Aorta (tissue), 5 donors: ENCODE measurements at regions of chr13 and their contacts with region 1.

Region 1: DNA sequence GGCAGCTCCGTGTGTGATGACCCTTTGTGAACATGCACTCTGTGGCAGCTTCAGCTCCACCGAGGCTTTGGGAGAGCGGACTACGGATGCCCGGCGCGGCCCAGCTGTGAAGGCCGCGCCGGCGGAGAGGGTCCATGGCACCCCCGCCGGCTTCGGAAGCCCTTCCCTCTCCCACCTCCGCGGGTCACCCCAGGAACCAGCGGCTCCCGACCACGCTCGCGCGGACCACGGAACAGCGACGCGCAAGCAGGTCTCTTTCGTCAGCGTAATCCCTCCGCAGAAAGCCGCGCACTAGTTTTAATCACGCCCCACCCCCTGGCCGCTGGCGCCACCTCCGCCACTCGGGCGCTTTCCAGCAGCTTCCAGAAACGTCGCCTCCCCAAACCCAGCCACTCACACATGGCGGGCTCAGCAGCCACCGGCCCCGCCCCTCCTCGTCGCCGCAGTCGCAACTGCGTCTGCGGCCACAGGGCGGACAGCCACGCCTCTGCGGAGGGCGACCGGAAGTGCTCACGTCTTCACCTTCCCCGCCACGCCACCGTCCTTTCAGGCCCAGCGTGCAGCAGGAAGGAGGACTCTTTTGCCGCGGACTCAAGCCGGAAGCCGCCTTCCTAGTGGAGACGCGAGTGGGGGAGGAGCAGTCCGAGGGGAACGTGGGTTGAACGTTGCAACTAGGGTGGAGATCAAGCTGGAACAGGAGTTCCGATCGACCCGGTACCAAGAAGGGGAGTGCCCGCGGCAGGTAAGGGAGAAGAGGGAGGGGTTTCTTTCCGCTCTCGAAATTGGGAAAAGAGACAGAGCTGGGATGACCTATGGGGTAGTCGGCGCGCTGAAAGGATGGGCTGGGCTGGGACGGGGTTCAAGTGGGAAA is at the start of gene USPL1:
- DNase-seq: peak; percentile 99
- ATAC-seq: peak; percentile 98
- H3K4me3 ChIP-seq: peak within 1 kb of the TSS; percentile 65 to 86
- H3K27ac ChIP-seq: peak within 1 kb of the TSS; percentile 74 to 99
- H3K4me1 ChIP-seq: peaks cover 0 to 4% of the 10 kb centered on the region in 2 donors
- H3K27me3 ChIP-seq: no peaks in the 10 kb centered on the region
- total RNA-seq, gene USPL1: 15.6 to 18.8 TPM

Region 2: GRCh38 chr13:30306762-30307193 is 310.8 kb before region 1 on chr13:
- intact Hi-C with region 1: loop called in 1 of 2 experiments (anchors 5 kb)
- DNase-seq: peak; percentile 96 to 98
- ATAC-seq: peak; percentile 98
- H3K4me3 ChIP-seq: peak overlapping the region; percentile 84 to 98
- H3K27ac ChIP-seq: no peak overlapping the region
- H3K4me1 ChIP-seq: peaks cover 0 to 4% of the 10 kb centered on the region in 2 donors
- H3K27me3 ChIP-seq: no peaks in the 10 kb centered on the region

Region 3: GRCh38 chr13:30465585-30466357 is 151.8 kb before region 1 on chr13 and contains the start of gene HMGB1:
- intact Hi-C with region 1: loop called (anchors 1 to 10 kb)
- DNase-seq: peak; percentile 99
- ATAC-seq: peak; percentile 98
- H3K4me3 ChIP-seq: peak within 1 kb of the TSS; percentile 62 to 69
- H3K27ac ChIP-seq: peak within 1 kb of the TSS; percentile 83 to 94
- H3K4me1 ChIP-seq: peaks cover 0 to 1% of the 10 kb centered on the region in 2 donors
- H3K27me3 ChIP-seq: no peaks in the 10 kb centered on the region
- total RNA-seq, gene HMGB1: 213 to 235 TPM

Region 4: GRCh38 chr13:30739761-30740642 is 122.5 kb after region 1 on chr13:
- intact Hi-C with region 1: loop called in 1 of 2 experiments (anchors 5 kb)
- DNase-seq: no peak
- ATAC-seq: no peak
- H3K4me3 ChIP-seq: no peak overlapping the region
- H3K27ac ChIP-seq: peak overlapping the region in 1 of 2 donors; percentile 8
- H3K4me1 ChIP-seq: peaks cover 4 to 8% of the 10 kb centered on the region in 2 donors
- H3K27me3 ChIP-seq: no peaks in the 10 kb centered on the region

Region 5: DNA sequence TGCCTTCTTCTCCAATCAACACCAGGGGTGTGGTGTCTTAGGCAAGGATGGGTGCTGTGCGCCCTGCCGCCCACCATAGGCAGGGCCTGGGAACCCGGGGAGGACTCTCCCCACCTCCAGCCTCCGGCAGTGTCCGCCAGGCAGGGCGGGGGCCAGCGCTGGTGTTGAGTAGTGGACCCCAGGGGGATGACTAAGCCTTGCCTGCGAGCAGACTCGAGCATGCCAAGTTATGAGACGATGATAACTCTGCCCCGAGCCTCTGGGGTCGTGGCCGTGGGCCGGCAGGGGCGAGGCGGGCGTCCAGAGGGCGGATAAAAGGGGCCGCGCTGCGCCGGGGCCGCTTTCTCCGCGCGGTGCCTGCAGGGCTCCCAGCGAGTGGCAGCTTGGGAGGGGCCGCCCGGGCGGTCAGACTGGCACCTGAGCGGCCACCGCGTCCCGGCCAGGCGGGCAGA is 288.4 kb after region 1 on chr13 and contains the start of gene MEDAG:
- intact Hi-C with region 1: loop called in 1 of 2 experiments (anchors 5 kb)
- DNase-seq: peak; percentile 92 to 96
- ATAC-seq: peak; percentile 92
- H3K4me3 ChIP-seq: peak within 1 kb of the TSS; percentile 37 to 49
- H3K27ac ChIP-seq: peak within 1 kb of the TSS; percentile 79 to 90
- H3K4me1 ChIP-seq: peaks cover 0 to 8% of the 10 kb centered on the region in 2 donors
- H3K27me3 ChIP-seq: no peaks in the 10 kb centered on the region
- total RNA-seq, gene MEDAG: 146 to 188 TPM